GM12878 (cell line): ENCODE measurements at regions of chr9 and their contacts with region 1.

Region 1: DNA sequence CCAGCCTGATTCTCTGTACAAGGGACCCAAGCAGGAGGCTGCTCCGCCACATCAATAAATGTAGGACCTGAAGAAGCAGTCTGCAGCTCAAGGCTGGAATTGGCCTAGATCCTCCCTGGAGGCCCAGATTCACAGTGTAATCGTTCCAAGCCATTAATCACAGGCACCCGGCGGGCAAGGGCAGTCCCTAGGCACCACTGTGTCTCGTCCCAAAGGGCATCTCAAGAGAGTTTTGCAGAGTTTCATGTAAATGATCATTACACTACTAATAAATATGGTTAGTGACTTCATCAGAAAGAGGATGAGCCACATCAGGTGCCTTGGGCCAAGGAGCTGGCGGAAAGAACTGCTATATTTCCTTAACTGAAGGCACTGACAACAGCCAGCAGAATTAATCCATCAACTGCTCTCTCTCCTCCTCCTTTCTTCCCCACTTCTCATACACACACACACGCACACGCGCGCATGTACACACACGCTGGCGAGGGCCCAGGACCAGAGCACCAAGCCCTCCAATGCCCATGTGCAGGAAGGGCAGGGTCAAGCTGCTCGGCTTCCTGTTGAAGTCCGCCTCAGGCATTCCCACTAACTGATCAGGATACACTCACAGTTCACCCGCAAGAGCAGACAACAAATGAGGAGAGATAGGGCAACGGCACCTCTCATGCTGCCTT is 33.9 kb downstream of the GNAQ start:
- DNase-seq: no peak
- ATAC-seq: peak; percentile 66
- H3K4me3 ChIP-seq: no peak overlapping the region
- H3K27ac ChIP-seq: no peak overlapping the region
- H3K4me1 ChIP-seq: no peaks in the 10 kb centered on the region
- H3K27me3 ChIP-seq: no peaks in the 10 kb centered on the region; a peak in 3 of 4 replicates
- CTCF ChIP-seq: no peak
- EP300 ChIP-seq: no peak
- POLR2A ChIP-seq: no peak
- RAD21 ChIP-seq: no peak

Region 2: GRCh38 chr9:77876091-77876490 is 121.7 kb before region 1 on chr9:
- CTCF ChIA-PET with region 1: no interaction called
- POLR2A ChIA-PET with region 1: no interaction called
- RAD21 ChIA-PET with region 1: no interaction called
- SMC1A ChIA-PET with region 1: no interaction called
- in situ Hi-C with region 1: no loop called
- intact Hi-C with region 1: no loop called
- DNase-seq: no peak
- ATAC-seq: no peak
- H3K4me3 ChIP-seq: no peak overlapping the region
- H3K27ac ChIP-seq: no peak overlapping the region
- H3K4me1 ChIP-seq: no peaks in the 10 kb centered on the region
- H3K27me3 ChIP-seq: no peaks in the 10 kb centered on the region
- CTCF ChIP-seq: no peak
- EP300 ChIP-seq: no peak
- POLR2A ChIP-seq: no peak
- RAD21 ChIP-seq: no peak

Region 3: GRCh38 chr9:77987081-77987656 is 10.6 kb before region 1 on chr9:
- CTCF ChIA-PET with region 1: interaction called, 4 read pairs
- POLR2A ChIA-PET with region 1: interaction called, 21 read pairs
- RAD21 ChIA-PET with region 1: interaction called, 7 read pairs
- SMC1A ChIA-PET with region 1: interaction called, 19 read pairs
- in situ Hi-C with region 1: no loop called
- intact Hi-C with region 1: no loop called
- DNase-seq: no peak
- ATAC-seq: no peak
- H3K4me3 ChIP-seq: no peak overlapping the region
- H3K27ac ChIP-seq: no peak overlapping the region
- H3K4me1 ChIP-seq: no peaks in the 10 kb centered on the region
- H3K27me3 ChIP-seq: no peaks in the 10 kb centered on the region; a peak in 1 of 4 replicates
- CTCF ChIP-seq: no peak
- EP300 ChIP-seq: no peak
- POLR2A ChIP-seq: no peak
- RAD21 ChIP-seq: no peak

Region 4: DNA sequence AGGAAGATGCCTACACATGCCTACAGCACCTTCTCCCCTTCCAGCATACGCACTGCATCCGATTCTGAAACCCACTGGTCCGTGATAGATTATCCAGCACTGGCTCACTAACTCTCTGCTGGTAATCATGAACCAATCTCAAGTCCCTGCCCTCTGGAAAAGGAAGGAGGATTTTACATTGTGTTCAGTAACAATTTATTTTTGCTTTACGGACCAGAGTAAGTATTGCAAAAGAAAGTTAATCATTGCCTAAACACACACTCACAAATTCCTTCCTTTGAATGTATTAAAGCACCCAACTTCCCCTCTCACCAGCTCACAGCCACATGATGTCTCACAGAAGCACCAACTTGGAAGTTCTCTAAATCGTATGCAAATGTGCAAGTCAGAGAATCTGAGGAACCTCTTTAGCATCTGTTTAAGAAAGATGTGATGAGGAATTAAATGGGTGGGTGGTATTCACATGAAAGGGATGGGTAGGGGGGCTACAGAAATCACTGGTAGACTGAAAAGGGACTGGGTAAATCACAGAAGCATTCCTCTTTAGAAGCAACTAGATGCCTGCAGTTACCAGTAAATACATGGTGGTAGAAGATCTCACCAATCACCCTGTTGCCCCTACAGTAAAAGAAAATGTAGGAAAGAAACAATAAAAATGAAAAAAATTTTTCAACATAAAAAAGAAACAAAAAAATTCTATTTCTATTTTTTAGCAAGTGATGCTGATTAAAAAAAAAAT is 25.4 kb after region 1 on chr9:
- CTCF ChIA-PET with region 1: interaction called, 3 read pairs
- POLR2A ChIA-PET with region 1: interaction called, 3 read pairs
- RAD21 ChIA-PET with region 1: interaction called, 7 read pairs
- SMC1A ChIA-PET with region 1: interaction called, 12 read pairs
- in situ Hi-C with region 1: no loop called
- intact Hi-C with region 1: no loop called
- DNase-seq: no peak
- ATAC-seq: peak; percentile 54
- H3K4me3 ChIP-seq: no peak overlapping the region
- H3K27ac ChIP-seq: no peak overlapping the region
- H3K4me1 ChIP-seq: no peaks in the 10 kb centered on the region
- H3K27me3 ChIP-seq: no peaks in the 10 kb centered on the region; a peak in 2 of 4 replicates
- CTCF ChIP-seq: no peak
- EP300 ChIP-seq: 0 out of 4 replicates have a peak, but pooled peaks of 1 of the 2 experiments have one; percentile 11
- POLR2A ChIP-seq: no peak
- RAD21 ChIP-seq: no peak

Region 5: GRCh38 chr9:78053627-78054026 is 55.9 kb after region 1 on chr9:
- CTCF ChIA-PET with region 1: no interaction called
- POLR2A ChIA-PET with region 1: no interaction called
- RAD21 ChIA-PET with region 1: no interaction called
- SMC1A ChIA-PET with region 1: no interaction called
- in situ Hi-C with region 1: no loop called
- intact Hi-C with region 1: no loop called
- DNase-seq: no peak
- ATAC-seq: no peak
- H3K4me3 ChIP-seq: no peak overlapping the region
- H3K27ac ChIP-seq: no peak overlapping the region
- H3K4me1 ChIP-seq: no peaks in the 10 kb centered on the region
- H3K27me3 ChIP-seq: no peaks in the 10 kb centered on the region
- CTCF ChIP-seq: no peak
- EP300 ChIP-seq: no peak
- POLR2A ChIP-seq: no peak
- RAD21 ChIP-seq: no peak